ENCODE measurements at regions of chr3 and their contacts with region 1.

Region 1: GRCh38 chr3:159600291-159600690 is 388.3 kb upstream of the IL12A start:
- DNase-seq: no peak
- ATAC-seq: no peak
- H3K4me3 ChIP-seq: no peak overlapping the region
- H3K27ac ChIP-seq: no peak overlapping the region
- H3K4me1 ChIP-seq: no peaks in the 10 kb centered on the region
- H3K27me3 ChIP-seq: no peaks in the 10 kb centered on the region
- CTCF ChIP-seq: no peak

Region 2: GRCh38 chr3:159627634-159628033 is 27.3 kb after region 1 on chr3:
- intact Hi-C with region 1: loop called in 1 of 2 experiments (anchors 2 kb)
- DNase-seq: no peak
- ATAC-seq: no peak
- H3K4me3 ChIP-seq: no peak overlapping the region
- H3K27ac ChIP-seq: no peak overlapping the region
- H3K4me1 ChIP-seq: no peaks in the 10 kb centered on the region
- H3K27me3 ChIP-seq: no peaks in the 10 kb centered on the region
- CTCF ChIP-seq: no peak

Measured in psoas muscle (tissue), 8 donors.